CD4-positive, alpha-beta memory T cell (primary cell): ENCODE measurements at regions of chr12 and their contacts with region 1.

Region 1: GRCh38 chr12:66301944-66302826 is at the start of gene HELB:
- DNase-seq: peak; percentile 86 to 94 (median 87)
- H3K4me3 ChIP-seq: peak within 1 kb of the TSS; percentile 66 to 95
- H3K4me3 Mint-ChIP-seq: peak within 1 kb of the TSS; percentile 87 to 100 (median 98)
- H3K27ac ChIP-seq: peak within 1 kb of the TSS; percentile 94
- H3K27ac Mint-ChIP-seq: peak within 1 kb of the TSS; percentile 96 to 99 (median 98)
- H3K4me1 ChIP-seq: peaks cover 45% of the 10 kb centered on the region
- H3K4me1 Mint-ChIP-seq: peaks cover 30 to 62% (median 36%) of the 10 kb centered on the region in 4 donors
- H3K27me3 ChIP-seq: no peaks in the 10 kb centered on the region
- H3K27me3 Mint-ChIP-seq: no peaks in the 10 kb centered on the region
- total RNA-seq, gene HELB: 64.9 to 69.0 TPM

Region 2: DNA sequence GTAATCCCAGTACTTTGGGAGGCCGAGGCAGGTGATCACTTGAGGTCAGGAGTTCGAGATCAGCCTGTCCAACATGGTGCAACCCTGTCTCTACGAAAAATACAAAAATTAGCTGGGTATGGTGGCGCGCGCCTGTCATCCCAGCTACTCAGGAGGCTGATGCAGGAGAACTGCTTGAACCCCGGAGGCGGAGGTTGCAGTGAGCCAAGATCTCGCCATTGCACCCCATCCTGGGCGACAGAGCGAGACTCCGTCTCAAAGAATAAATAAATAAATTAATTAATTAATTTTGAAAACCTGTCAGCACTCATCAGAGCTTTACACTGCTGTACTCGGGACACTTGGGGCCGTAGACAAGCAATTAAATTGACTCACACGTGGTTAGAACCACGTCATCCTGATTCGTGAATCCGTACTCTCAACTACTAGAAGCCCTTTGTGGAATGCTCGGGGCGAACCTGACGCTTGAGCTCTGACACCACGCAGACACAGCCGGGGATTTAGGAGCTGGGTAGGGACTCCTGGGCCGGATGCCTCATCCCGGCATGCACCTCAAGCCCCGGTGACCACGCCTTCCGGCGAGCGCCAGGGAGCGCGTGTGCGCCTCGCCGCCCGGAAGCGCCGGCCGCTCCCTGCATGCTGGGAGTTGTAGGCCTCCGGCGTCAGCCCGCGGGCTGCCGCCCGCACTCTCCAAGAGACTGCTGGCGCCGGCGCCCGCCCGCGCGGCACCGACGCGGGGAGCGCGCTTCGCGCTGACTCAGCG is 1898.3 kb before region 1 on chr12 and contains the start of gene XPOT:
- CTCF ChIA-PET with region 1: no interaction called
- POLR2A ChIA-PET with region 1: no interaction called
- intact Hi-C with region 1: loop called (anchors 10 kb)
- DNase-seq: peak; percentile 91 to 95 (median 94)
- H3K4me3 ChIP-seq: peak within 1 kb of the TSS; percentile 78 to 86
- H3K4me3 Mint-ChIP-seq: peak within 1 kb of the TSS; percentile 90 to 98 (median 96)
- H3K27ac ChIP-seq: peak within 1 kb of the TSS; percentile 91
- H3K27ac Mint-ChIP-seq: peak within 1 kb of the TSS; percentile 94 to 98 (median 97)
- H3K4me1 ChIP-seq: peaks cover 33% of the 10 kb centered on the region
- H3K4me1 Mint-ChIP-seq: peaks cover 21 to 49% (median 37%) of the 10 kb centered on the region in 4 donors
- H3K27me3 ChIP-seq: no peaks in the 10 kb centered on the region
- H3K27me3 Mint-ChIP-seq: no peaks in the 10 kb centered on the region
- total RNA-seq, gene XPOT: 88.8 TPM

Region 3: GRCh38 chr12:66169221-66170170 is 132.7 kb before region 1 on chr12 and contains the start of gene TMBIM4:
- CTCF ChIA-PET with region 1: interaction called, 3 read pairs
- POLR2A ChIA-PET with region 1: interaction called, 27 read pairs
- intact Hi-C with region 1: loop called (anchors 1 kb)
- DNase-seq: peak; percentile 86 to 94 (median 87)
- H3K4me3 ChIP-seq: peak within 1 kb of the TSS; percentile 85 to 92
- H3K4me3 Mint-ChIP-seq: peak within 1 kb of the TSS; percentile 91 to 98 (median 96)
- H3K27ac ChIP-seq: peak within 1 kb of the TSS; percentile 98
- H3K27ac Mint-ChIP-seq: peak within 1 kb of the TSS; percentile 95 to 99 (median 98)
- H3K4me1 ChIP-seq: peaks cover 43% of the 10 kb centered on the region
- H3K4me1 Mint-ChIP-seq: peaks cover 33 to 61% (median 48%) of the 10 kb centered on the region in 4 donors
- H3K27me3 ChIP-seq: no peaks in the 10 kb centered on the region
- H3K27me3 Mint-ChIP-seq: peaks cover 2 to 3% of the 10 kb centered on the region in 2 donors
- total RNA-seq, gene TMBIM4: 98.5 to 108 TPM

Region 4: DNA sequence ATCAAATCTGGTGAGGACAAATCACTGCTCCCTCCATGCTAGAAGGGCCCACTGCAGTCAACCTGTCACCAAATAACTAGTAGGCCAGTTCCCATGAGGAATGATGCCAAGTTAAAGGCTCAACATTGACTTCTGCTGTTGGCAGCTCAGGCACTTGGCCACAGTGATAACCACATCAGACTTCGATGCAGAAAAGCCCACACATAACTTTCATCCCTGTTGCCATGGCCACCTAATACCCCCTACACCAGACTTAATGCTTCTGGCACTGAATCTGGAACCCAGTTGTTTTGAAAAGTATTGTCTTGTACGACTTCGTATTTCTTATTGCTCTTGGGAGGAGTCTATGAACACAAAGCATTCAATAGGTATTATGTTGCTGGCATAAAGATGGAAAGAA is 44.2 kb before region 1 on chr12:
- CTCF ChIA-PET with region 1: no interaction called
- POLR2A ChIA-PET with region 1: no interaction called
- intact Hi-C with region 1: no loop called
- DNase-seq: no peak
- H3K4me3 ChIP-seq: no peak overlapping the region
- H3K4me3 Mint-ChIP-seq: no peak overlapping the region
- H3K27ac ChIP-seq: no peak overlapping the region
- H3K27ac Mint-ChIP-seq: no peak overlapping the region
- H3K4me1 ChIP-seq: no peaks in the 10 kb centered on the region
- H3K4me1 Mint-ChIP-seq: no peaks in the 10 kb centered on the region
- H3K27me3 ChIP-seq: no peaks in the 10 kb centered on the region
- H3K27me3 Mint-ChIP-seq: peaks cover 0 to 1% of the 10 kb centered on the region in 2 donors

Region 5: GRCh38 chr12:66279123-66279712 is 23.0 kb before region 1 on chr12:
- CTCF ChIA-PET with region 1: interaction called, 54 read pairs
- POLR2A ChIA-PET with region 1: interaction called, 51 read pairs
- intact Hi-C with region 1: loop called (anchors 1 kb)
- DNase-seq: peak; percentile 43 to 58 (median 58)
- H3K4me3 ChIP-seq: no peak overlapping the region
- H3K4me3 Mint-ChIP-seq: peak overlapping the region; percentile 17 to 82 (median 65)
- H3K27ac ChIP-seq: no peak overlapping the region
- H3K27ac Mint-ChIP-seq: peak overlapping the region in 4 of 7 donors; percentile 5 to 58 (median 28)
- H3K4me1 ChIP-seq: peaks cover 43% of the 10 kb centered on the region
- H3K4me1 Mint-ChIP-seq: peaks cover 37 to 74% (median 59%) of the 10 kb centered on the region in 4 donors
- H3K27me3 ChIP-seq: no peaks in the 10 kb centered on the region
- H3K27me3 Mint-ChIP-seq: no peaks in the 10 kb centered on the region

Region 6: DNA sequence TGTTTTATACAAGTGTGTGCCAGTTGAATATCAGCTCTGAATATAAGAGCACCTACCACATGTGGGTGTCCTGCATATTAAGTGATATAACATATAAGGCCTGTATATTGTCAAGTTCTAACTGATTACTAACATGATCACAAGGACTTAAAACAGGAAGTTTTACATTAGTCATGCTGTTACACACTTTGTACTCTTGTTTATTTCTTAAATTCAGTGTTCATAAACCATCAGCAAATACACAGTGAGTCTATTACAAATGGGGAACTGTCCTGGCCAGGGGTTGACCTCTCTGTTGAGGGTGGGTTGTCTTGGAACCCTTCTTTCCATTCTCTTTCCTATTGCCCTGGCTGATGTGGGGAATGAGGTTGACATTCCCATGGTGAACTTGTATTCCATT is 19.2 kb after region 1 on chr12:
- CTCF ChIA-PET with region 1: interaction called, 3 read pairs
- POLR2A ChIA-PET with region 1: interaction called, 5 read pairs
- intact Hi-C with region 1: loop called (anchors 2 kb)
- DNase-seq: no peak
- H3K4me3 ChIP-seq: no peak overlapping the region
- H3K4me3 Mint-ChIP-seq: peak overlapping the region in 1 of 8 donors; percentile 3
- H3K27ac ChIP-seq: no peak overlapping the region
- H3K27ac Mint-ChIP-seq: peak overlapping the region in 5 of 7 donors; percentile 33 to 80 (median 63)
- H3K4me1 ChIP-seq: peaks cover 16% of the 10 kb centered on the region
- H3K4me1 Mint-ChIP-seq: peaks cover 30 to 66% (median 53%) of the 10 kb centered on the region in 4 donors
- H3K27me3 ChIP-seq: no peaks in the 10 kb centered on the region
- H3K27me3 Mint-ChIP-seq: no peaks in the 10 kb centered on the region

Region 7: GRCh38 chr12:66531766-66532165 is 229.6 kb after region 1 on chr12:
- CTCF ChIA-PET with region 1: no interaction called
- POLR2A ChIA-PET with region 1: no interaction called
- intact Hi-C with region 1: no loop called
- DNase-seq: no peak
- H3K4me3 ChIP-seq: no peak overlapping the region
- H3K4me3 Mint-ChIP-seq: no peak overlapping the region
- H3K27ac ChIP-seq: no peak overlapping the region
- H3K27ac Mint-ChIP-seq: no peak overlapping the region
- H3K4me1 ChIP-seq: no peaks in the 10 kb centered on the region
- H3K4me1 Mint-ChIP-seq: no peaks in the 10 kb centered on the region
- H3K27me3 ChIP-seq: no peaks in the 10 kb centered on the region
- H3K27me3 Mint-ChIP-seq: peaks cover 0 to 4% of the 10 kb centered on the region in 2 donors